Heart right ventricle (tissue), 16 donors: ENCODE measurements at regions of chr11 and their contacts with region 1.

Region 1: DNA sequence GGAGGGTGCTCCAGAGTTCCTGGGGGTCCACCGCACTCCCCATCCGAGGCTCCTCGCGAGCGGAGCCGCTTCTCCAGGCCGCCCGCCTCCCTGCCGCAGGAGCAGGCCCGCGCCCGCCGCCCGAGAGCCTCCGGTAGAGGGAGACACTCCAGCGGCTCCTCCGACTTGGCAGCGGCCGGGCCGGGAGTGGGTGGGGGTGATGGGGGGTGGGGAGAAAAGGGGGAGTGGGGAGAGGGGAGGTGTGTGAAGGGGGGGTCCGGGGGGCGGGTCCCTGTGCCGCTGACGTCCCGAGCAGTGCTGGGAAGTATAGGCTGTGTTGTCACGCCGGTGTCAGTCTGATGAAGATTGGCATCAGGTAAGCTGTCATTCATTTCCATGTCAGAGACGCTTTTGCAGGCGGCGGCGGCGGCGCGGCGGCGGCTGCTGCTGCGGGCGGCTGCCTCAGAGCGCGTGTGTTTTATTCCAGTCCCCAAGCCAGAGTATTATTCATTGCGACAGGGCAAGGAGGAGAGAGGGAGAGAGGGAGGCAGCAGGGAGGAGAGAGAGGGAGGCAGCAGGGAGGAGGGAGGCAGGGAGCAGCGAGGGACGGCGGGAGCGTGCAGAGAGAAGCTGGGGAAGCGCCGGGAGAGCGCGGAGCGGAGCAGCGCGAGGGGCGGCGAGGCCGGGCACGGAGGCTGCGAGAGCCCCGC is at the start of gene PKNOX2:
- DNase-seq: peak; percentile 81 to 83
- ATAC-seq: peak; percentile 79 to 86 (median 84)
- H3K4me3 ChIP-seq: peak within 1 kb of the TSS; percentile 58 to 80 (median 74)
- H3K27ac ChIP-seq: peak within 1 kb of the TSS; percentile 29 to 87 (median 80)
- H3K4me1 ChIP-seq: peaks cover 2 to 54% (median 34%) of the 10 kb centered on the region in 9 donors
- H3K27me3 ChIP-seq: peaks cover 0 to 82% (median 23%) of the 10 kb centered on the region in 7 donors
- CTCF ChIP-seq: peak; percentile 43 to 81 (median 66)
- total RNA-seq, gene PKNOX2: 3.1 to 5.8 (median 4.9) TPM

Region 2: GRCh38 chr11:125062931-125063428 is 101.6 kb before region 1 on chr11 and contains the start of gene SLC37A2:
- intact Hi-C with region 1: no loop called
- DNase-seq: peak; percentile 58 to 68
- ATAC-seq: peak; percentile 87 to 95 (median 90)
- H3K4me3 ChIP-seq: peak within 1 kb of the TSS; percentile 33 to 81 (median 68)
- H3K27ac ChIP-seq: peak within 1 kb of the TSS in 7 of 10 donors; percentile 3 to 89 (median 57)
- H3K4me1 ChIP-seq: peaks cover 0 to 25% (median 9%) of the 10 kb centered on the region in 9 donors
- H3K27me3 ChIP-seq: peaks cover 0 to 41% (median 32%) of the 10 kb centered on the region in 7 donors
- CTCF ChIP-seq: peak in 7 of 9 donors; percentile 15 to 49 (median 38)
- total RNA-seq, gene SLC37A2: 0.74 to 10.5 (median 1.7) TPM

Region 3: DNA sequence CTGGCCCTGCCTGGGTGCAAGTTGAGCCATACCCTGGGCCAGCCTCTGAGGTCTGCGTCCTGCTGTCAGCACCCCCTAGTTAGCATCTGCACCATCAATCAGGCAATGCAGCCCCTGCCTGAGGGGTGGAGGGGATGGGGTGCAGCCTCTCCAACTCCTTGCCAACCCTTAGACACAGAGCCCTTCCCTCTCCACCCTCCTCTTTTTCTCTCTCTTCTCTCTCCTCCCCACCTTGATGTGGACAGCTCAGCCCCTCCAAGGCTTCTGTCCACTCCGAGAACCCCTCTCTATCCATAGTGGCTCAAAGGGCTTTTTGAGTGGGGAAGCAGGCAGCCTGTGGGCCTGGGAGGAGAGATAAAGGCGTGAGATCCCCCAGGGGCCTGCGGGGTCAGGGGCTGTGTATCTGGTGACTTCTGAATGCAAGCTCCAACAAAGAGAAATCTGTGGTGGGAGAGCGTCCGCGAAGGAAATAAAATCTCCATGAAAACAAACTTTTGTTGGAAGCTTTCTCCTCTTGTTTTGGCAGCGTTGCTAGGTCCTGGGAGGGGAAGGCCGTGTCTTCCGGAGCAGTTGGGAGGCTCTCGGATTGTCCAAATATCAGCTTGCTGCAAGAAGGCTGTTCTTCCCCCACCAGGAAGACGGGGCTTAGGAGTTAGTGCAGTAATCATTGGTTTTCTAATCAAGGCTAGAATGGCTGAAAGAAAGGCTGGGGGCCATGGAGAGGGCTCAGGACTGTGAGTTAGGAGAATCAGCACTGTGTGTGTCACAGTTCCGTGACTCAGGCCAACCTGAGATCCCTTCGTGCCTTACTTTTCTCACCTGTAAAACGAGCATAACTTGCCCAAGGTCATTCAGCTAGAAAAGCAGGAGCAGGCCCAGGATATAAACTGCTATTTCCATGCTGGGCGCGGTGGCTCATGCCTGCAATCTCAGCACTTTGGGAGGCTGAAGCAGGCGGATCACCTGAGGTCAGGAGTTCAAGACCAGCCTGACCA is 50.3 kb after region 1 on chr11:
- intact Hi-C with region 1: loop called in 2 of 10 experiments (anchors 5 to 10 kb)
- DNase-seq: peak; percentile 58 to 72
- ATAC-seq: peak; percentile 61 to 92 (median 81)
- H3K4me3 ChIP-seq: no peak overlapping the region
- H3K27ac ChIP-seq: peak overlapping the region in 8 of 10 donors; percentile 46 to 75 (median 62)
- H3K4me1 ChIP-seq: peaks cover 0 to 52% (median 27%) of the 10 kb centered on the region in 9 donors
- H3K27me3 ChIP-seq: no peaks in the 10 kb centered on the region
- CTCF ChIP-seq: no peak

Region 4: DNA sequence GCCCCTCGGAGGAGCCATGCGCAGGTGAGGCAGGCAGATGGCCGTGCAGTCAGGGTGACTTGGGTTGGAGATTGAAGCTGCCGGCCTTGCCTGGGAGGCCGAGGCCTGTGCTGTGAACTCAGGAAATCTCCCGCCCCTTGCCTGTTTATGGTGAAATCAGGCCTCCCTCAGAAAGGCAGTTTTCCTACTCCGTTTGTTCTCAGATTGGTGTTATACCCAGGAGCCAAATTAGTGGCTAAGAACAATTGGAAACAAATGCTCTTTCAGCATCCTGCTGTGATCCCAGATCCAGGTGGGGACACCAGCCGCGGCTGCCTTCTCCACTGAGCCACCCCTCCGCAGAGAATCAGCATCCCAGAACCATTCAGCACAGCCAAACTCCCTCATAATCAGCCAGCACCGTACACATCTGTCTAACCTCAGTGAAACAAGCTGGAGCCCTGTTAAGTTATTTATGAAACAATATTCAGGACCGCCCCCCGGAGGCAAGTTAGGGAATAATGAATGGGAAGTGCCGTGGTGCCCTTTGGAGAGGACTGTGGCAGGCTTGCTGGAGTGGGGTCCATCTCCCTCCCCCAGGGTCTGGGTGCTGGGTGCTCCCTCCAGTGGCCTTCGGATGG is 59.9 kb after region 1 on chr11:
- intact Hi-C with region 1: loop called in 2 of 10 experiments (anchors 5 to 10 kb)
- DNase-seq: peak; percentile 25 to 54
- ATAC-seq: peak; percentile 31 to 75 (median 60)
- H3K4me3 ChIP-seq: no peak overlapping the region
- H3K27ac ChIP-seq: peak overlapping the region in 7 of 10 donors; percentile 11 to 58 (median 35)
- H3K4me1 ChIP-seq: peaks cover 0 to 28% (median 5%) of the 10 kb centered on the region in 9 donors
- H3K27me3 ChIP-seq: no peaks in the 10 kb centered on the region
- CTCF ChIP-seq: peak in 7 of 9 donors; percentile 30 to 53 (median 40)

Region 5: DNA sequence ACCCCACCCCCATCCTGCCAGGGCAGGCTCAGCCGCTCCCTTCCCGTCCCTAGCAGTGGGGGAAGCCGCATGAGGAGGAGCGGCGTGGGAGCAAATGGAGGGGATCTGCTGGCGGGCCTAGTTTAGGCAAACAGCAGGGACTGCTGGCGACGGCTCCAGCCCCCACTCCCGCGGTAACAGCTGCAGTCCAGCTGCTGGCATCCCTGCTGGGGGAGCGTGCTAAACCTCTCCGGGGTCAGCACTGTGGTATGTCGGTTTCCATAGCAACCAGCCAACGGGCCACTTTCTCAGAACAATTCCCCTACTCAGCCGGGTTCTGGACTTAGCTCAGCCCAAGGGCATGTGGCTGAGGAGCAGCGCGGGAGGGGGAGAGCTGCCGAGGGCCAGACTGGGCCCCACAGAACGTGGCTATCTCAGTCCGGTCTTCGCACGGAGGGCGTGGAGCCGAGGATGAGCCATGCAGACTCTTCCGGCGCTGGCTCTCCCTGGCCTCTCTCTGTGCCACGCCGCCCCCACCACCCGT is 98.8 kb after region 1 on chr11:
- intact Hi-C with region 1: loop called in 1 of 10 experiments (anchors 10 kb)
- DNase-seq: peak; percentile 82 to 85
- ATAC-seq: peak; percentile 85 to 92 (median 90)
- H3K4me3 ChIP-seq: peak overlapping the region in 3 of 10 donors; percentile 5 to 23 (median 10)
- H3K27ac ChIP-seq: peak overlapping the region in 8 of 10 donors; percentile 48 to 70 (median 57)
- H3K4me1 ChIP-seq: peaks cover 6 to 39% (median 20%) of the 10 kb centered on the region in 9 donors
- H3K27me3 ChIP-seq: peaks cover 5 to 37% (median 30%) of the 10 kb centered on the region in 7 donors
- CTCF ChIP-seq: no peak

Region 6: GRCh38 chr11:125345421-125346178 is 181.0 kb after region 1 on chr11:
- intact Hi-C with region 1: loop called in 9 of 10 experiments (anchors 1 to 10 kb)
- DNase-seq: peak; percentile 81 to 85
- ATAC-seq: peak; percentile 76 to 88 (median 82)
- H3K4me3 ChIP-seq: no peak overlapping the region
- H3K27ac ChIP-seq: peak overlapping the region in 9 of 10 donors; percentile 31 to 81 (median 64)
- H3K4me1 ChIP-seq: peaks cover 3 to 43% (median 23%) of the 10 kb centered on the region in 9 donors
- H3K27me3 ChIP-seq: no peaks in the 10 kb centered on the region
- CTCF ChIP-seq: peak; percentile 75 to 93 (median 88)

Region 7: DNA sequence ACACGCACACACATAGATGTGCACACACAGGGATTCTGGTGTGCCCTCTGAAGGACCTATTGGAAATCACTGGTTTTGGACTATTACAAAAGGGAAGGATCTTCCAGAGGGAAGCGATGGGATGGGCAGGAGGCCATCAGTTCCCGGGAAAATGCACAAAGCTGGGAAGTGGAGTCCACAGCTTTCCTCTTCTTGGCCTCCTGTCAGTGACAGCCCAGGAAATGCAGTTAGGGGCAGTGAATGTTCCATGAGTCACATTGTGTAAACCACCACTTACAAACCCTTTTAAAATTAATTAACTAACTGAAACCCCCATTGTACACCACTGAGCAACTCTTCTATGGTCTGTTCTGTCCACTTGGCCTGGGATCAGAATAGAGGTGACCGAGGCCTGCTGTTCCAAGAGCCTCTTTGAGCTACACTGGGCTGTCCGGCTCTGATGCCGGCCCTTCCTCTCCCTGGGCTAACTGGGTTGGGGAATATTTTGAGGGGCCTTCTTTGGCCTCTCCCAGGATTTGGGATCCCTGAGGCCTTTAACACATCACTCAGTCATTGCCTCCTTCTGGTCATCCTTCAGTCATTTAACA is 193.8 kb after region 1 on chr11:
- intact Hi-C with region 1: loop called in 1 of 10 experiments (anchors 5 kb)
- DNase-seq: no peak
- ATAC-seq: no peak
- H3K4me3 ChIP-seq: no peak overlapping the region
- H3K27ac ChIP-seq: no peak overlapping the region
- H3K4me1 ChIP-seq: no peaks in the 10 kb centered on the region
- H3K27me3 ChIP-seq: no peaks in the 10 kb centered on the region
- CTCF ChIP-seq: no peak

Region 8: DNA sequence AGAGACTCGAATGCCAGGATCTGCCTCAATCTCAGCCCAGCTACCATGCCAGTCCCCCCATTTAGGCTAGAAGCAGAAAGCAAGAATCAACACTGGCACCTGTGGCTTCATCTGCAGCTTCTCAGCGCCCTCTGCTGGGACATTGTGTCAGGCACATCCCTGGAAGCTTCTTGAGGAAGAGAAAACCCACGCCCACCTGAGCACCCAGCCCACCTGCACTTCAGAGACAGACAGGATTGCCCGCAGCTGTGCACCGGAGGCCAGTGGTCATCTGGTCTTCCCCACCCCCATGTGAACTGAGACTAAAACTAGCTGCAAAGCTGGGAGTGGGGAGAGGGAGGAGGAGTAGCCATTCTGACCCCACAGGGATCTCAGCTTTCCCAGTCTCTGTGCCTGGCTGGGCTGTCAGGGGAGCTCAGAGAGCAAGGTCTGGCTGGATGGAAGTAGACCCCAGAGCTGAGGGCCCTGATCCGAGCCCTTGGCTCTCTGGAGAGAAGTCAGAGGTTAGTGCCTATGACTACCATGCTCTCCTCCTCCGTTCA is 264.7 kb after region 1 on chr11:
- intact Hi-C with region 1: loop called in 1 of 10 experiments (anchors 5 kb)
- DNase-seq: peak; percentile 53 to 64
- ATAC-seq: peak in 1 of 8 donors; percentile 57
- H3K4me3 ChIP-seq: no peak overlapping the region
- H3K27ac ChIP-seq: no peak overlapping the region
- H3K4me1 ChIP-seq: peaks cover 0 to 44% (median 16%) of the 10 kb centered on the region in 9 donors
- H3K27me3 ChIP-seq: no peaks in the 10 kb centered on the region
- CTCF ChIP-seq: peak; percentile 39 to 74 (median 65)